CD4-positive, alpha-beta memory T cell (primary cell): ENCODE measurements at regions of chr17 and their contacts with region 1.

Region 1: GRCh38 chr17:42609182-42609813 is at the starts of genes RETREG3 and TUBG1:
- DNase-seq: peak; percentile 98 to 100 (median 100)
- H3K4me3 ChIP-seq: peak within 1 kb of the TSS; percentile 87 to 92
- H3K4me3 Mint-ChIP-seq: peak within 1 kb of the TSS; percentile 99 to 100 (median 100)
- H3K27ac ChIP-seq: peak within 1 kb of the TSS; percentile 85
- H3K27ac Mint-ChIP-seq: peak within 1 kb of the TSS; percentile 90 to 100 (median 99)
- H3K4me1 ChIP-seq: peaks cover 47% of the 10 kb centered on the region
- H3K4me1 Mint-ChIP-seq: peaks cover 25 to 55% (median 40%) of the 10 kb centered on the region in 4 donors
- H3K27me3 ChIP-seq: no peaks in the 10 kb centered on the region
- H3K27me3 Mint-ChIP-seq: no peaks in the 10 kb centered on the region
- total RNA-seq, gene RETREG3: 128 to 134 TPM
- total RNA-seq, gene TUBG1: 13.6 to 16.5 TPM

Region 2: GRCh38 chr17:42554250-42555121 is 54.8 kb before region 1 on chr17:
- CTCF ChIA-PET with region 1: no interaction called
- POLR2A ChIA-PET with region 1: interaction called, 10 read pairs
- intact Hi-C with region 1: no loop called
- DNase-seq: peak; percentile 68 to 80 (median 74)
- H3K4me3 ChIP-seq: peak overlapping the region; percentile 49 to 69
- H3K4me3 Mint-ChIP-seq: peak overlapping the region; percentile 86 to 92 (median 91)
- H3K27ac ChIP-seq: peak overlapping the region; percentile 77
- H3K27ac Mint-ChIP-seq: peak overlapping the region; percentile 79 to 94 (median 93)
- H3K4me1 ChIP-seq: peaks cover 17% of the 10 kb centered on the region
- H3K4me1 Mint-ChIP-seq: peaks cover 10 to 43% (median 19%) of the 10 kb centered on the region in 4 donors
- H3K27me3 ChIP-seq: no peaks in the 10 kb centered on the region
- H3K27me3 Mint-ChIP-seq: no peaks in the 10 kb centered on the region

Region 3: DNA sequence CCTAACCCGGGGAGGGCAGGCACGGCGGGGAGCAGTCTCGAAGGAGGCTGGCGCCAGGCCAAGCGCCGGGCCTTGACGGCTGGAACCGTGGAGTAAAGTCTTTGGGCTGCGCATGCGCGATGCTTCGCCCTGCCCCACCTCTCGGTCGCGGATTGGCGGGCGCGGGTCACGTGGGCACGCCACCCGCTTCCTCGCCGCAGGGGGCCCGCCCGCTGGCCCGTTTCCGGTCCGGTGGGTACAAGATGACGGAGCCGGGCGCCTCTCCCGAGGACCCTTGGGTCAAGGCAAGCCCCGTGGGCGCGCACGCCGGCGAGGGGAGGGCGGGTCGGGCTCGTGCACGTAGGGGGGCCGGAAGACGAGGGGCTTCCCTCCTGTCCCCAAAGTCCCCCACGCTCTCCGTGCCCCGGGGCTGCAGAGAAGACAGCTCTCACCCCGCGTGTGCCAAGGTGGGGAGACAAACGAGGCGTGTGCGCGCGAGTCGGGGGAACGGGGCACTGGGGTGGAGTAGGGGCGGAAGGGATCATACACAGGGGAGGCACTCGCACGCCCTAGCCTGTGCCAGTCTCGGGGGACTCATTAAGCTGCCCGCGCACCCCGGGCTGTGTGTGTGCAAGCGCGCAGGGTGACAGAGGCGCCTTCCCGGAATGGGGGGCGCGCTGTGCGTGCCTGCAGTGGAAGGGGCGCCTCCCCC is 42.3 kb before region 1 on chr17 and contains the start of gene MLX:
- CTCF ChIA-PET with region 1: no interaction called
- POLR2A ChIA-PET with region 1: interaction called, 19 read pairs
- intact Hi-C with region 1: no loop called
- DNase-seq: peak; percentile 90 to 91 (median 90)
- H3K4me3 ChIP-seq: peak within 1 kb of the TSS; percentile 89 to 97
- H3K4me3 Mint-ChIP-seq: peak within 1 kb of the TSS; percentile 94 to 98 (median 96)
- H3K27ac ChIP-seq: peak within 1 kb of the TSS; percentile 79
- H3K27ac Mint-ChIP-seq: peak within 1 kb of the TSS; percentile 95 to 98 (median 96)
- H3K4me1 ChIP-seq: peaks cover 56% of the 10 kb centered on the region
- H3K4me1 Mint-ChIP-seq: peaks cover 13 to 65% (median 42%) of the 10 kb centered on the region in 4 donors
- H3K27me3 ChIP-seq: no peaks in the 10 kb centered on the region
- H3K27me3 Mint-ChIP-seq: no peaks in the 10 kb centered on the region
- total RNA-seq, gene MLX: 73.3 to 73.7 TPM

Region 4: GRCh38 chr17:42598905-42599304 is 10.4 kb before region 1 on chr17:
- CTCF ChIA-PET with region 1: interaction called, 3 read pairs
- POLR2A ChIA-PET with region 1: interaction called, 20 read pairs
- intact Hi-C with region 1: no loop called
- DNase-seq: no peak
- H3K4me3 ChIP-seq: no peak overlapping the region
- H3K4me3 Mint-ChIP-seq: peak overlapping the region in 3 of 8 donors; percentile 4 to 39 (median 6)
- H3K27ac ChIP-seq: no peak overlapping the region
- H3K27ac Mint-ChIP-seq: peak overlapping the region in 4 of 7 donors; percentile 52 to 77 (median 66)
- H3K4me1 ChIP-seq: peaks cover 19% of the 10 kb centered on the region
- H3K4me1 Mint-ChIP-seq: peaks cover 17 to 48% (median 31%) of the 10 kb centered on the region in 4 donors
- H3K27me3 ChIP-seq: no peaks in the 10 kb centered on the region
- H3K27me3 Mint-ChIP-seq: no peaks in the 10 kb centered on the region

Region 5: DNA sequence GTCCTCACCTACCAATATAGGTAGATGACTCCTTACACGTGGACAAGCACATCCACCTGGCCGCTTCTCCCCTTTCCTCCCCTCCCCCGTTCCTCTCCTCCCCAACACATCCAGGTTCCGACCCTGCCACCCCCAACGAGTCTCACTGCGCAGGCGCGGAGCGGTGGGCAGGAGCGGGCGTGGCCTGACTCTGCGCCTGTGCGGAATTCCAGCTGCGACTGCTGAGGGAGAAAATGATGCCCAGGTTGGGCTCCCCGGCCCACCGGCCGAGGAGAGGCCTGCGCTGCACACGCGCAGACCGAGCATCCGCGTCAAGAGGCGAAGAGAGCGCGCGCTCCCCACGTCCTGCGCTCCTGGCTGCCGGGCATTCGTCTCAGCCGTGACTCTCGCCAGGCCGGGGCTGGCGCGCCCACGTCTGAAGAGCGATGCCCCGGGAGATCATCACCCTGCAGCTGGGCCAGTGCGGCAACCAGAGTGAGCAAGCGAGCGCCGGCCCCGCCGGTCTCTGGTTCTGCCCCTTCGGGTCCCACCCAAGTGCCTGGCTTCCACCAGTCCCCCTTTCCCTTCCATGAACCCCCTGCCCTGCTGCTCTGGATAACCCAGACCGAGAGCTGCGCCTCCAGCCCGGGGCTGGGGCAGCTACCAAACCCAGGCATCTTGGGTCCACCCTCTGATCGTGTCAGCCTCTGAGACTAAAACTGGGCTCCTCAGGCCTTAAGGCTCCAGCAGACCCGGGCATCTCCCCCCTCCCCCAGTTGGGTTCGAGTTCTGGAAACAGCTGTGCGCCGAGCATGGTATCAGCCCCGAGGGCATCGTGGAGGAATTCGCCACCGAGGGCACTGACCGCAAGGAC is 50.0 kb after region 1 on chr17 and contains the start of gene TUBG2:
- CTCF ChIA-PET with region 1: no interaction called
- POLR2A ChIA-PET with region 1: interaction called, 3 read pairs
- intact Hi-C with region 1: loop called (anchors 5 kb)
- DNase-seq: peak in 4 of 5 donors; percentile 57 to 62 (median 59)
- H3K4me3 ChIP-seq: peak within 1 kb of the TSS; percentile 76 to 88
- H3K4me3 Mint-ChIP-seq: peak within 1 kb of the TSS; percentile 87 to 93 (median 92)
- H3K27ac ChIP-seq: peak within 1 kb of the TSS; percentile 35
- H3K27ac Mint-ChIP-seq: peak within 1 kb of the TSS in 6 of 7 donors; percentile 81 to 94 (median 84)
- H3K4me1 ChIP-seq: peaks cover 12% of the 10 kb centered on the region
- H3K4me1 Mint-ChIP-seq: peaks cover 10 to 24% (median 17%) of the 10 kb centered on the region in 4 donors
- H3K27me3 ChIP-seq: no peaks in the 10 kb centered on the region
- H3K27me3 Mint-ChIP-seq: peaks cover 0 to 2% of the 10 kb centered on the region in 2 donors
- total RNA-seq, gene TUBG2: 18.1 to 19.1 TPM

Region 6: GRCh38 chr17:42677008-42677857 is 67.9 kb after region 1 on chr17:
- CTCF ChIA-PET with region 1: interaction called, 17 read pairs
- POLR2A ChIA-PET with region 1: interaction called, 55 read pairs
- intact Hi-C with region 1: loop called (anchors 1 kb)
- DNase-seq: peak; percentile 91 to 98 (median 93)
- H3K4me3 ChIP-seq: peak overlapping the region; percentile 63 to 75
- H3K4me3 Mint-ChIP-seq: peak overlapping the region; percentile 86 to 97 (median 90)
- H3K27ac ChIP-seq: peak overlapping the region; percentile 42
- H3K27ac Mint-ChIP-seq: peak overlapping the region; percentile 79 to 94 (median 89)
- H3K4me1 ChIP-seq: peaks cover 74% of the 10 kb centered on the region
- H3K4me1 Mint-ChIP-seq: peaks cover 32 to 70% (median 46%) of the 10 kb centered on the region in 4 donors
- H3K27me3 ChIP-seq: peaks cover 36% of the 10 kb centered on the region
- H3K27me3 Mint-ChIP-seq: peaks cover 23 to 27% of the 10 kb centered on the region in 2 donors

Region 7: DNA sequence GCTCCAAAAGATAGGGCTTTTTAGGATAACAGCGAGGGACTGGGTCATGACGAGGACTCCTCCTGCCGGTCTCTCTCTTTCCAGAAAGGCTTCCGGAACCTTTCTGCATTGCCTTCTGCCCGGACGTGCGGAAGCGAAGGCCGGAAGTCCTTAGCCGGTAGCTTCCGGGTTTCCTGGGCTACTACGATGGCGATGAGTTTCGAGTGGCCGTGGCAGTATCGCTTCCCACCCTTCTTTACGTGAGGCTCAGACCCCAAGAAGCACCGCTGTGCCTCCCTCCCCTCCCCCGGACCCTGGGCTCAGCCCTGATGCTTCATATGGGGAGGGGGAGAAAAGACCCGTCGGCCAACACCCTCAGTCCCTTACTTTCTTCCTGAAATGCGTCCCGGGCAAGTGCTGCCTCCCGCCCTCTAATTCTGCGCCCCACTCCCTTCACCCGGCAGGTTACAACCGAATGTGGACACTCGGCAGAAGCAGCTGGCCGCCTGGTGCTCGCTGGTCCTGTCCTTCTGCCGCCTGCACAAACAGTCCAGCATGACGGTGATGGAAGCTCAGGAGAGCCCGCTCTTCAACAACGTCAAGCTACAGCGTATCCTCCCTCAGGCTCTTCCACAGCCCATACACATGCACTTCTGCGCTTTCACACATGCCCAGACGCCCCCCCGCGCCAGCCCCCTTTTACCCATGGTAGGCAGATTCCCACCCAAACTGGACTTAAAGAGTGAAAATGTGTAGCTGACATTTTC is 164.2 kb after region 1 on chr17 and contains the start of gene VPS25:
- CTCF ChIA-PET with region 1: no interaction called
- POLR2A ChIA-PET with region 1: interaction called, 5 read pairs
- intact Hi-C with region 1: loop called (anchors 1 kb)
- DNase-seq: peak; percentile 70 to 77 (median 71)
- H3K4me3 ChIP-seq: peak within 1 kb of the TSS; percentile 90 to 100
- H3K4me3 Mint-ChIP-seq: peak within 1 kb of the TSS; percentile 98 to 99 (median 99)
- H3K27ac ChIP-seq: peak within 1 kb of the TSS; percentile 81
- H3K27ac Mint-ChIP-seq: peak within 1 kb of the TSS; percentile 91 to 99 (median 98)
- H3K4me1 ChIP-seq: peaks cover 17% of the 10 kb centered on the region
- H3K4me1 Mint-ChIP-seq: peaks cover 11 to 28% (median 19%) of the 10 kb centered on the region in 4 donors
- H3K27me3 ChIP-seq: no peaks in the 10 kb centered on the region
- H3K27me3 Mint-ChIP-seq: no peaks in the 10 kb centered on the region
- total RNA-seq, gene VPS25: 39.3 to 43.6 TPM